Aorta (tissue), 5 donors: ENCODE measurements at regions of chr5 and their contacts with region 1.

Region 1: GRCh38 chr5:127030259-127031146 is at the start of gene MARCHF3:
- DNase-seq: peak; percentile 97 to 98
- ATAC-seq: peak; percentile 99
- H3K4me3 ChIP-seq: peak within 1 kb of the TSS; percentile 40 to 69
- H3K27ac ChIP-seq: peak within 1 kb of the TSS; percentile 24 to 65
- H3K4me1 ChIP-seq: no peaks in the 10 kb centered on the region
- H3K27me3 ChIP-seq: no peaks in the 10 kb centered on the region
- total RNA-seq, gene MARCHF3: 21.1 to 23.1 TPM

Region 2: DNA sequence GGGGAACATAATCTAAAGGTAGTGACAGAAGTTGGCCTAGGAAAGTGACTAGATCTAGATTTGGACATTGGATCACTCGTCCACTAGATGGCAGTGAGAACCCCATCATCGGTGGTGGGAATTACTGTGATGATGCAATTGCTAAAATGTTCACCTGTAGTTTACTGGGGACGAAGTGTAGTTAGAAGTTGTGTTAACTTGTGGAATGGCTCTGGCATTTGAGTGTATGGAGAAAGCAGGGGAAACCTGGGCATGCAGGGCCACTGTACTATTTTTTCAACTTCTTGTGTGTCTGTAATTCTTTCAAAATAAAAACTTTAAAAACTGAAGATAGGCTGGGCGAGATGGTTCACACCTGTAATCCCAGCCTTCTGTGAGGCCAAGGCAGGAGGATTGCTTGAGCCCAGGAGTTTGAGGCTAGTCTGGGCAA is 354.3 kb before region 1 on chr5:
- intact Hi-C with region 1: loop called in 1 of 2 experiments (anchors 10 kb)
- DNase-seq: no peak
- ATAC-seq: peak; percentile 83
- H3K4me3 ChIP-seq: no peak overlapping the region
- H3K27ac ChIP-seq: no peak overlapping the region
- H3K4me1 ChIP-seq: no peaks in the 10 kb centered on the region
- H3K27me3 ChIP-seq: no peaks in the 10 kb centered on the region

Region 3: GRCh38 chr5:126776497-126777256 is 253.8 kb before region 1 on chr5 and contains the start of gene LMNB1:
- intact Hi-C with region 1: loop called in 1 of 2 experiments (anchors 2 kb)
- DNase-seq: peak; percentile 98
- ATAC-seq: peak; percentile 96
- H3K4me3 ChIP-seq: peak within 1 kb of the TSS; percentile 57 to 95
- H3K27ac ChIP-seq: peak within 1 kb of the TSS in 1 of 2 donors; percentile 64
- H3K4me1 ChIP-seq: peaks cover 0 to 3% of the 10 kb centered on the region in 2 donors
- H3K27me3 ChIP-seq: no peaks in the 10 kb centered on the region
- total RNA-seq, gene LMNB1: 5.2 to 8.9 TPM

Region 4: DNA sequence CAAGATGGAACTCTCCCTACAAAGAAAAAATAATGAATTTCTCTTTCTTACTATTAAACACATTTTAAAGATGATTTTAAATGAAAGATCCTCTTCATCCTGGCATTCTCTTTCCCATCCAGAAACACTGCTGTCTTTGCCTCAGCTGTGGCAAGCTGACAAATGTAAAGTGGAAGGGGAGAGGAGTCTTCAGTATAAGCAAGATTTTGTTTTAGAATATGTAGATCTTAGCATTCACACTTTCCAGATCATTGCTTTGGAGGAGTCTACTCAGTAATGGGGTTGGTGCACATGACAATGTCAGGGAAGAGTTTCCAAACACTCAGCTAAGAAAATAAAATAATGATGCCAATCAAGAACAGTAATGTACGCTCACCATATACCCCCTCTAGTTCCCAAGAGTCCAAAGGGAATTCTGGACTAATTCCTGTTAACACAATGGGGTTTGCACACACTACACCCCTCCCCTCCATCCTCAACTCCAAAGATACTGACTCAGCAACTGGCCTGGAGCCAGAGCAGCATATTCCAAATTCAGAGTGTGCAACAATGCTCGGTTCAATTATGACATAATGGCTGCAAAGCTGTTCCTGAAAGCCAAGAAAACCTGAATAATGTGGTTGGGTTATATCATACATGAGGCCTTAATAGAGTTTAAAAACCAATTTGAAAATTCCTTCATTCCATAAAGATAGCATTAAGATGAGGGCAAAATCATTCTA is 38.2 kb after region 1 on chr5:
- intact Hi-C with region 1: loop called in 1 of 2 experiments (anchors 5 kb)
- DNase-seq: no peak
- ATAC-seq: no peak
- H3K4me3 ChIP-seq: no peak overlapping the region
- H3K27ac ChIP-seq: no peak overlapping the region
- H3K4me1 ChIP-seq: no peaks in the 10 kb centered on the region
- H3K27me3 ChIP-seq: no peaks in the 10 kb centered on the region

Region 5: GRCh38 chr5:127088251-127089010 is 57.9 kb after region 1 on chr5:
- intact Hi-C with region 1: no loop called
- DNase-seq: no peak
- ATAC-seq: no peak
- H3K4me3 ChIP-seq: no peak overlapping the region
- H3K27ac ChIP-seq: no peak overlapping the region
- H3K4me1 ChIP-seq: no peaks in the 10 kb centered on the region
- H3K27me3 ChIP-seq: no peaks in the 10 kb centered on the region